Mammary epithelial cell (primary cell): ENCODE measurements at regions of chr15 and their contacts with region 1.

Region 1: GRCh38 chr15:84929744-84930371 is 45.4 kb downstream of the SLC28A1 start:
- DNase-seq: peak; percentile 98
- H3K4me3 ChIP-seq: no peak overlapping the region
- H3K27ac ChIP-seq: peak overlapping the region; percentile 11
- H3K4me1 ChIP-seq: peaks cover 13% of the 10 kb centered on the region
- H3K27me3 ChIP-seq: no peaks in the 10 kb centered on the region
- CTCF ChIP-seq: no peak

Region 2: DNA sequence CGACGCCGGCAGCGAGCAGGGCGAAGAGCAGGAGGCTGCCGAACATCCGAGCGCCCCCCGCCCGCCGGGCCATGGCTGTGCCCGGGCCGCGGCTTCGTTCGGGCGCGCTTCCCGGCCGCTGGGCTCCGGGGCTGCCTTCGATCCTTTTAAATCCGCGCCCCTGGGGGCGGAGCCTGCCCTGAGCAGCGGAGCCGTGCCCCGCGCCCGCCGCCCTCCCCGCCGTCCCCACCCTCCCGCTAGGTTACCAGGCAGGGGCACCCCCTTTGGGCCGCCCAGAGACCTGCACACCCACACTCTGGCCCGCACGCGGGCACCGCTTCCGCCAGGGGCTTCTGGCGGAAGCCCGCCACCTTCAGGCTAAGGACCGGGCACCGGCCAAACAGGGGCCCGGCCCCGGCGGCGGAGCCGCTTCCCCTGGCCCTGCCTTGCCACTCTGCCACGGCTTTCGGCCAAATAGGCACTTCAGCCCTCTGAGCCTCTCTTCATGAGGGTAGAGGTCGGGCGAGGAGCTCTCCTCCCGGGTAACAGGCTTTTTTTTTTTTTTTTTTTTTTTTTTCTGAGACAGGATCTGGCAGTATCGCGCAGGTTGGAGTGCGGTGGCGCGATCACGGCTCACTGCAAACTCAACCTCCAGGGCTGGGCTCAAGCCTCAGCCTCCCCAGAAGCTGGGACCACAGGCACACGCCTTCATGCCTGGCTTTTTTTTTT is 271.6 kb before region 1 on chr15 and contains the start of gene NMB:
- CTCF ChIA-PET with region 1: no interaction called
- dilution Hi-C with region 1: no loop called
- in situ Hi-C with region 1: loop called in 1 of 2 experiments (anchors 10 kb)
- intact Hi-C with region 1: loop called (anchors 1 kb)
- DNase-seq: peak; percentile 54
- H3K4me3 ChIP-seq: peak within 1 kb of the TSS; percentile 40 to 57 (median 56)
- H3K27ac ChIP-seq: peak within 1 kb of the TSS; percentile 30
- H3K4me1 ChIP-seq: peaks cover 16% of the 10 kb centered on the region
- H3K27me3 ChIP-seq: no peaks in the 10 kb centered on the region
- CTCF ChIP-seq: peak; percentile 30 to 75
- total RNA-seq, gene NMB: 1.0 to 3.7 TPM

Region 3: DNA sequence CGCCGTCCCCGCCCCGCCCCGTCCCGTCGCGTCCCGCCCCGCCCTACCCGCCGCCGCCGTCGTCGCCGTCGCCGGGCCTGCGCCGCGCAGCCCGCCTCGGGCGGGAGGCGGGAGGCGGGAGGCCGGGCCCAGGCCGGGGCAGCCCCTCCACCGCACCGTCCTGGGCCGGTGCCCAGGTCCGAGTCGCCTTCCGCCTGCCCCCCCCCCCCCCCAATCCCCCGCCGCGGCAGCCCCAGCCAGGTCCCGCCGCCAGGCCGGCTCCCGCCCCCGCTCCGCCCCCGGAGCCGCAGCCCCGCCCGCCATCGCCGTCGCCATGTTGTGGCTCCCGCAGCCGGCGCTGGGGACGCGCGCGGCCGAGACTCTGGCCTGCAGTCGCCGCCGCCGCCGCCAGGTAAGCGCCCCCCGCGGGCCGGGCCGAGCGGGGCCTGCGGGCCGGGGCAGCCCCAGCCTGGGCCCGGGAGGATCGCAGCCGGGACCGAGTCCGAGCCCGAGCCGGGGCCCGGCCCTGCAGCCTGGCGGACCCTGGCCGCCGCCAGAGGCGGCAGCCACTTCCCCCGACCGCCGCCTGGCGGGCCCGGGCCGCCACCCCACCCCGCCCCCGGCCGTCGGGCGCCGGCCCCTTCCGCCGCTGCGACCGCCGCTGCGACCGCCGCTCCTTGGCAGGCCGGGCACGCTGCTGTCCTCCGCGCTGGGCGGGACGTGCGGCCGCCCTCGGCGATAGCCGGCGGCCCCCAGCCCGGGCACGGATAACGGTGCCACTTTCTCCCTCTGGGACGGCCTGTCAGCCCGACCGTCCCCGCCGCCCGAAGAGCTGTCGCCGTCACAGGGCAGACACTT is 181.4 kb before region 1 on chr15 and contains the start of gene ZNF592:
- CTCF ChIA-PET with region 1: no interaction called
- dilution Hi-C with region 1: no loop called
- in situ Hi-C with region 1: no loop called
- intact Hi-C with region 1: loop called (anchors 10 kb)
- DNase-seq: peak; percentile 66
- H3K4me3 ChIP-seq: peak within 1 kb of the TSS; percentile 86 to 91 (median 88)
- H3K27ac ChIP-seq: peak within 1 kb of the TSS; percentile 77
- H3K4me1 ChIP-seq: peaks cover 23% of the 10 kb centered on the region
- H3K27me3 ChIP-seq: no peaks in the 10 kb centered on the region
- CTCF ChIP-seq: no peak
- total RNA-seq, gene ZNF592: 9.7 to 19.5 TPM

Region 4: GRCh38 chr15:84840741-84841429 is 89.0 kb before region 1 on chr15:
- CTCF ChIA-PET with region 1: no interaction called
- dilution Hi-C with region 1: no loop called
- in situ Hi-C with region 1: loop called in 1 of 2 experiments (anchors 10 kb)
- intact Hi-C with region 1: loop called (anchors 1 kb)
- DNase-seq: peak; percentile 12
- H3K4me3 ChIP-seq: no peak overlapping the region
- H3K27ac ChIP-seq: no peak overlapping the region
- H3K4me1 ChIP-seq: no peaks in the 10 kb centered on the region
- H3K27me3 ChIP-seq: no peaks in the 10 kb centered on the region
- CTCF ChIP-seq: no peak